ENCODE measurements at regions of chr6 and their contacts with region 1.

Region 1: DNA sequence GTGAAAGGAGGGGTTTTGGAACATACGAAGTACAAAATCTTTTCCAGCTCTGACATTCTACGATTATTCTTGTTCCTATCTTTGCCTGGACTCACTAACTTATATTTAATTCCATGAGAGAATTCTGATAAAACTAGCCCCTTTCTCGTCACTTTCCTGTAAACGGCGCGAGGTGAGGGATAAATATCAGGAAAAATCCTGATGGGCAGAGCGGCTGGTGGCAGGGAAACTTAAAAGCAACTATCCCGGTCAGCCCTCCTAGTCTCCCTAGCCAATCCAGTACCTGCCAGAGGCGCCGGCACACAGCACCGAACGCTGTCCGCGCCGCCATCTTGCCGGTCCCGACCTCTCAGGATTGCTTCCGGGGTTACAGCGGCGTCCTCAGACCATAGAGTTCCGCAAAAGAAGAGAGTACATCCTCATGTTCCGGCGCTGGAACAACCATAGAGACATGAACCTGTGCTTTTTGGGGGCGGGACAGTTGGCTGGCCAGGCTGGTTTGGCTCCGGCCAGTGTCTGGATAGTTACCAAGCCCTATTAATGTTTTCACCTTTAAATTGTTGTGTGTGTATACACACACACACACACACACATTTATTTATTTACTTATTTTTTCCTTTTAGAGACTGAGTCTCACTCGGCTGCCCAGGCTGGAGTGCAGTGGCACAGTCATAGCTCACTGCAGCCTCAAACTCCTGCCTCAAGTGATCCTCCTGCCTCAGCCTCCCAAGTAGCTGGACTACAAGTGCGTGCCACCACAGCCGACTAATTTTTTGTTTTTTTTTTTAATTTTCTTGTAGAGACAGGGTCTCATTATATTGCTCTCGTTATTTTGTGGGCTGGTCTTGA is at the start of gene MRPS10:
- DNase-seq: peak; percentile 94
- H3K4me3 ChIP-seq: peak within 1 kb of the TSS; percentile 59
- H3K27ac ChIP-seq: peak within 1 kb of the TSS; percentile 34
- H3K4me1 ChIP-seq: no peaks in the 10 kb centered on the region
- H3K27me3 ChIP-seq: no peaks in the 10 kb centered on the region
- CTCF ChIP-seq: no peak
- total RNA-seq, gene MRPS10: 32.5 to 33.0 TPM

Region 2: GRCh38 chr6:41155132-41155805 is 1062.5 kb before region 1 on chr6:
- intact Hi-C with region 1: no loop called
- DNase-seq: no peak
- H3K4me3 ChIP-seq: no peak overlapping the region
- H3K27ac ChIP-seq: no peak overlapping the region
- H3K4me1 ChIP-seq: no peaks in the 10 kb centered on the region
- H3K27me3 ChIP-seq: no peaks in the 10 kb centered on the region
- CTCF ChIP-seq: no peak

Region 3: DNA sequence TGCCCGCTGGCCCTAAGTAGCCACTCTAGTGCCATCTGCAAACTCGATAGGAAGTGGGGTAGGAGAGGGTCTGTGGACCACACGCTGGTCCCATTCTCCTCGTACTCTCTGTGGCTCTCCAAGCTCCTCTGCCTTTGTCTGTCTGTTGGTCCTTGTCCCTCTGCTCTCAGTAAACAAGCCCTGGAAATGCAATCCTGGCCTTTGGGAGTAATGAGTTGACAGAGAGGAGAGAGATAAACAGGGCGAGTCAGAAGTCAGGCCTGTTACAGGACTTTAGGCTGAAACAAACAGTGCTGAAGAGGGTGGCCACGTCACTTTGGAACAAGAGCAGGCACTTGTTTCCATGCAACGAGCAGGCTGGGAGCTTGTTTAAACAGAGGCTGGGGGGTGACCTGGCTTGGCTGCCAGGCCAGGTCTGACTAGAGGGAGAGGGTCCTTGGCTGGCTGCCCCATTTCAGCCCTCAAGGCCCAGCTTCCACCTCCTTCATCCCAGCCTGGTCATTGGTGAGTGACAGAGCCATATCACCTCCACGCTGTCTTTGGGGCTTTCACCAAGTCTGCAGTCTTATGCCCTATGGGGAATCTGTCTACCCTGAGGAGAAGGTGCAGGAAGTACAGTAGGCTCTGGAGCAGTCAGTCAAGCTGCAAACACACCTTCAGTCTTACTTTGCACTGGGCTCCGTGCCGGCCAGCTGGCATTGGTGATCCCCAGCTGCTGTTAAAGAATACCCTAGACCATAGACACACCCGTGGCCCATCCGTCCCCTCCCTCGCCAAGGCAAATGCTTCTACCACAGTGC is 649.0 kb before region 1 on chr6:
- intact Hi-C with region 1: no loop called
- DNase-seq: no peak
- H3K4me3 ChIP-seq: no peak overlapping the region
- H3K27ac ChIP-seq: no peak overlapping the region
- H3K4me1 ChIP-seq: no peaks in the 10 kb centered on the region
- H3K27me3 ChIP-seq: no peaks in the 10 kb centered on the region
- CTCF ChIP-seq: no peak

Region 4: GRCh38 chr6:42166444-42167141 is 51.1 kb before region 1 on chr6:
- intact Hi-C with region 1: loop called (anchors 2 kb)
- DNase-seq: peak; percentile 90
- H3K4me3 ChIP-seq: no peak overlapping the region
- H3K27ac ChIP-seq: no peak overlapping the region
- H3K4me1 ChIP-seq: no peaks in the 10 kb centered on the region
- H3K27me3 ChIP-seq: no peaks in the 10 kb centered on the region
- CTCF ChIP-seq: peak; percentile 96

Region 5: DNA sequence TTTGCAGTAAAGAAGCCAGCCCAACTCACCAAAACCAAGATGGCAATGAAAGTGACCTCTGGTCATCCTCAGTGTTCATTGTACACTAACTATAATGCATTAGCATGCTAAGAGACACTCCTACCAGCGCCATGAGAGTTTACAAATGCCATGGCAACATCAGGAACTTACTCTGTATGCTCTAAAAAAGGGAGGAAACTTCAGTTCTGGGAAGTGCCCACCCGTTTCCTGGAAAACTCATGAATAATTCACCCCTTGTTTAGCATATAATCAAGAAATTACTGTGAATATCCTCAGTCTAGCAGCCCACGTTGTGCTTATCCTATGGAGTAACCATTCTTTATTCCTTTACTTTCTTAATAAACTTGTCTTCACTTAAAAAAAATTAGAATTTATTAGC is 253.4 kb after region 1 on chr6:
- intact Hi-C with region 1: no loop called
- DNase-seq: no peak
- H3K4me3 ChIP-seq: no peak overlapping the region
- H3K27ac ChIP-seq: no peak overlapping the region
- H3K4me1 ChIP-seq: no peaks in the 10 kb centered on the region
- H3K27me3 ChIP-seq: no peaks in the 10 kb centered on the region
- CTCF ChIP-seq: no peak

Measured in colonic mucosa (tissue), 4 donors.